WTC11 (cell line): ENCODE measurements at regions of chr20 and their contacts with region 1.

Region 1: DNA sequence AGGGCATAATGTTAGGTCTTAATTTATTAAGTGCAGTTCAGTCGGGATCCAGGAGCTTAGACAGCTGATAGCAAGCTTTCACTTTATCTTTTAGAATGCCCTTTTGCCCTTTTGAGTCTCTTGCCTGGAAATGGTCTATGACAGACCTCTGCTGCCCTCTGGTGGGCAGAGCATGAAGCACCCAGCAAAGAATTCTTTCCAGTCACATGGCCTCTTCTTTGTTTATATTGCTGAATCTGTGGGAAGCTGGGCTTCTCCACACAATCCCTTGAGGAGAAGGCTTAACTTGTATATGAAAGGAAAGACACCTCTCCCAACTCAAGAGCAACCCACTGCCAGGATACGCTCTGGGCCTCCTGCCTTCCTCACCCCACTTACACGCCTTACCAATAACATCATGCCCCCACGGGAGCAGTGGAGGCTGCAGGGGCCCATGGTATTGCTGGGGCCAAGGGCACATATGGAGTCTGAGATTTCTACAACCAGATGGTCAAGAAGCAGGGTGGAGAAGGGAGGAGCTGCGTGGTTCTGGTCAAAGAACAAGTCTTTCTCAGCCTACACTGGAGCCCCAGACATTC is 20.4 kb downstream of the WFDC3 start:
- DNase-seq: peak; percentile 87
- ATAC-seq: peak; percentile 79
- H3K4me3 Mint-ChIP-seq: no peak overlapping the region
- H3K27ac Mint-ChIP-seq: peak overlapping the region; percentile 73
- H3K4me1 Mint-ChIP-seq: peaks cover 29% of the 10 kb centered on the region
- H3K27me3 Mint-ChIP-seq: no peaks in the 10 kb centered on the region
- CTCF ChIP-seq: peak; percentile 95

Region 2: DNA sequence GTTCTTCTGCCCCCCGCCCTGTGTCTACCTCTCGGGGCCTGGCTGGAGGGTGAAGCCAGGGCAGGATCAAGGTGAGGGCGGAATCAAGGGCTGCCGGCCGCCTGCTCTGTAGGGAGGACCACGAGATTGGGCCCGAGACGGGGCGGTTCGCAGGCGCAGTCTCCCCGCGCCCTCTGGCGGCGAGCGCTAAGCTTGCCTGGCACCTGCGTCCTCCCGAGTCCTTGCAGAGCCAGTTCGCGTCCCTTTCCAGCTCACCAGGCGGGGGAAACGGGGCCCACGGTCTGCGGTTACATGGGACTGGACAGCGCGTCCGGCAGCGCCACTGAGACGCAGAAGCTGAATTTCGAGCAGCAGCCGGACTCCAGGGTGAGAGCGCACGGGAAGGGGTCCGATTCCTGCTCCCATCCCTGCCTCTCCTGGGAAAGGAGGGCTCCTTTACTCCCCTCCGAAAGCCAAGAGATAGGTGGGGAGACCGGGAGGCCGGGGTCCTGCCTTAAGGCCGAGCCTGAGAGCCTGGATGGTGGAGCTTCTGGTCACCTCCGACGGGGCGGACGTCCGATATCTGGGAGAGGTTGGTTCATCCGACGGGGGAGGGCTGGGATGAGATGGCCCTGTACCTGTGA is 459.6 kb before region 1 on chr20:
- CTCF ChIA-PET with region 1: interaction called, 11 read pairs
- POLR2A ChIA-PET with region 1: no interaction called
- DNase-seq: peak; percentile 92
- ATAC-seq: peak; percentile 68
- H3K4me3 Mint-ChIP-seq: peak overlapping the region; percentile 63
- H3K27ac Mint-ChIP-seq: no peak overlapping the region
- H3K4me1 Mint-ChIP-seq: peaks cover 15% of the 10 kb centered on the region
- H3K27me3 Mint-ChIP-seq: peaks cover 33% of the 10 kb centered on the region
- CTCF ChIP-seq: peak; percentile 71

Region 3: GRCh38 chr20:45415774-45416637 is 355.3 kb before region 1 on chr20 and contains the start of gene PIGT:
- CTCF ChIA-PET with region 1: interaction called, 10 read pairs
- POLR2A ChIA-PET with region 1: no interaction called
- DNase-seq: peak; percentile 82
- ATAC-seq: peak; percentile 97
- H3K4me3 Mint-ChIP-seq: peak within 1 kb of the TSS; percentile 91
- H3K27ac Mint-ChIP-seq: peak within 1 kb of the TSS; percentile 71
- H3K4me1 Mint-ChIP-seq: peaks cover 10% of the 10 kb centered on the region
- H3K27me3 Mint-ChIP-seq: no peaks in the 10 kb centered on the region
- CTCF ChIP-seq: no peak
- total RNA-seq, gene PIGT: 63.7 to 67.7 TPM (median 67.7 TPM) in 3 replicates

Region 4: GRCh38 chr20:45470262-45470931 is 300.9 kb before region 1 on chr20:
- CTCF ChIA-PET with region 1: interaction called, 25 read pairs
- POLR2A ChIA-PET with region 1: no interaction called
- DNase-seq: peak; percentile 69
- ATAC-seq: peak; percentile 63
- H3K4me3 Mint-ChIP-seq: peak overlapping the region; percentile 77
- H3K27ac Mint-ChIP-seq: peak overlapping the region; percentile 92
- H3K4me1 Mint-ChIP-seq: peaks cover 45% of the 10 kb centered on the region
- H3K27me3 Mint-ChIP-seq: peaks cover 7% of the 10 kb centered on the region
- CTCF ChIP-seq: no peak

Region 5: GRCh38 chr20:45538209-45538799 is 233.0 kb before region 1 on chr20:
- CTCF ChIA-PET with region 1: interaction called, 44 read pairs
- POLR2A ChIA-PET with region 1: no interaction called
- DNase-seq: peak; percentile 60
- ATAC-seq: peak; percentile 89
- H3K4me3 Mint-ChIP-seq: no peak overlapping the region
- H3K27ac Mint-ChIP-seq: no peak overlapping the region
- H3K4me1 Mint-ChIP-seq: peaks cover 6% of the 10 kb centered on the region
- H3K27me3 Mint-ChIP-seq: no peaks in the 10 kb centered on the region
- CTCF ChIP-seq: no peak

Region 6: DNA sequence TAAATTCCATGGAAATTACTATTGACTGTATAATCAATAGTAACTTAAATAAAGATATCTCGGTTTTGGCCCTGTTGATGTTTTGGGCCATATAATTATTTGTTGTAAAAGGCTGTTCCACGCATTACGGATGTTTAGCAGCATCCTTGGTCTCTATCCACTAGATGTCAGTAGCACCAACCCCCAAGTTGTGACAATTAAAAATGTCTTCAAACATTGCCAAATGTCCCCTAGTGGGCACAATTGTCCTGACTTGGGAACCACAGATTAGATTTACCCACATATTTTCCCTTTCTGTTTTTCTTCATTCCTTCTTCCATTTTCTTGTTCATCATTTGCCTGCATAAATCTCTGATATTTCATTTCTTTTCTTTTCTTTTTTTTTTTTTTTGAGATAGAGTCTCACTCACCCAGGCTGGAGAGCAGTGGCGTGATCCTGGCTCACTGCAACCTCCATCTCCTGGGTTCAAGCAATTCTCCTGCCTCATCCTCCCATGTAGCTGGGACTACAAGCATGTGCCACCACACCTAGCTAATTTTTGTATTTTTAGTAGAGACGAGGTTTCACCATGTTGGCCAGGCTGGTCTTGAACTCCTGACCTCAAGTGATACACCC is 178.6 kb before region 1 on chr20:
- CTCF ChIA-PET with region 1: interaction called, 16 read pairs
- POLR2A ChIA-PET with region 1: interaction called, 3 read pairs
- DNase-seq: no peak
- ATAC-seq: peak; percentile 79
- H3K4me3 Mint-ChIP-seq: no peak overlapping the region
- H3K27ac Mint-ChIP-seq: no peak overlapping the region
- H3K4me1 Mint-ChIP-seq: peaks cover 10% of the 10 kb centered on the region
- H3K27me3 Mint-ChIP-seq: peaks cover 5% of the 10 kb centered on the region; the same call in 1 of the 2 replicates
- CTCF ChIP-seq: peak; percentile 22; the same call in 1 of the 2 replicates

Region 7: GRCh38 chr20:45727044-45727443 is 44.2 kb before region 1 on chr20:
- CTCF ChIA-PET with region 1: no interaction called
- POLR2A ChIA-PET with region 1: no interaction called
- DNase-seq: no peak
- ATAC-seq: no peak
- H3K4me3 Mint-ChIP-seq: no peak overlapping the region
- H3K27ac Mint-ChIP-seq: no peak overlapping the region
- H3K4me1 Mint-ChIP-seq: 0 out of 2 replicates have a peak, but pooled peaks cover 2% of the 10 kb centered on the region
- H3K27me3 Mint-ChIP-seq: no peaks in the 10 kb centered on the region; the same call in 1 of the 2 replicates
- CTCF ChIP-seq: no peak

Region 8: DNA sequence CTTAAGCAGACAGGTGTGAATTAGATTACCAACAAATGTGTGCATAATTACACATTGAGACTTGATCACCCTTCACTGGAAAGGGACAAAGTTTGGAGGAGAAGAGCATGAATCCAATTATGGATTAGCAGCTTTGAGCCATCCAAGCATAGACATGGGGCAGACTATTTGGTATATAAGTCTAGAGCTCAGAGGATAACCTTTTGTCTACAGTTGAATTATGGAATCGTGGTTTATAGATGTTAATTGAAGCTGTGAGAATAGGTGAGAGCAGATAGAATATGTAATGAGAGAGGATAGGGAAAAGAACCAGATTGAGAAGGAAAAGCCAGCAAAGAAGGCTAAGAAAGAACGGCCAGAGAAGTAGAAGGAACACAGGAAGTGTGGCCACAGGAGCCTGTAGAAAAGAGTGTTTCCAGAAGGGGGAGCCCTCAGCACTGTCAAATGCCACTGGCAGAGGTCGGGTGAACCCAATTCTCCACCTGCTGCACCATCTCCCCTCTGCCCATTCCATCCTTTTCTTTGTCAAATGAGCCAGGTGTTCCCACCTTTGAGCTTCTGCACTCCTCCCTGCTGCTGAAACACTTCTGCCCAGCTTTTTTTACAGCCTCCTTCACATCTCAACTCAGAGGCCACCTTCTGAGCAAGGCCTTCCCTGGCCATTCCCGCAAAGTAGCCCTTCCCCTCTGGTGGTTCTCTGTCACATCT is 27.8 kb after region 1 on chr20:
- CTCF ChIA-PET with region 1: interaction called, 17 read pairs
- POLR2A ChIA-PET with region 1: no interaction called
- DNase-seq: peak; percentile 75
- ATAC-seq: peak; percentile 99
- H3K4me3 Mint-ChIP-seq: no peak overlapping the region
- H3K27ac Mint-ChIP-seq: no peak overlapping the region
- H3K4me1 Mint-ChIP-seq: peaks cover 4% of the 10 kb centered on the region; the same call in 1 of the 2 replicates
- H3K27me3 Mint-ChIP-seq: no peaks in the 10 kb centered on the region
- CTCF ChIP-seq: peak; percentile 64

Region 9: GRCh38 chr20:45812157-45813020 is 41.1 kb after region 1 on chr20 and contains the start of gene UBE2C:
- CTCF ChIA-PET with region 1: no interaction called
- POLR2A ChIA-PET with region 1: no interaction called
- DNase-seq: peak; percentile 97
- ATAC-seq: peak; percentile 98
- H3K4me3 Mint-ChIP-seq: peak within 1 kb of the TSS; percentile 99
- H3K27ac Mint-ChIP-seq: peak within 1 kb of the TSS; percentile 85
- H3K4me1 Mint-ChIP-seq: peaks cover 24% of the 10 kb centered on the region
- H3K27me3 Mint-ChIP-seq: no peaks in the 10 kb centered on the region
- CTCF ChIP-seq: no peak
- total RNA-seq, gene UBE2C: 249 to 251 TPM (median 249 TPM) in 3 replicates